Ascending aorta (tissue), 2 donors: ENCODE measurements at regions of chr3 and their contacts with region 1.

Region 1: DNA sequence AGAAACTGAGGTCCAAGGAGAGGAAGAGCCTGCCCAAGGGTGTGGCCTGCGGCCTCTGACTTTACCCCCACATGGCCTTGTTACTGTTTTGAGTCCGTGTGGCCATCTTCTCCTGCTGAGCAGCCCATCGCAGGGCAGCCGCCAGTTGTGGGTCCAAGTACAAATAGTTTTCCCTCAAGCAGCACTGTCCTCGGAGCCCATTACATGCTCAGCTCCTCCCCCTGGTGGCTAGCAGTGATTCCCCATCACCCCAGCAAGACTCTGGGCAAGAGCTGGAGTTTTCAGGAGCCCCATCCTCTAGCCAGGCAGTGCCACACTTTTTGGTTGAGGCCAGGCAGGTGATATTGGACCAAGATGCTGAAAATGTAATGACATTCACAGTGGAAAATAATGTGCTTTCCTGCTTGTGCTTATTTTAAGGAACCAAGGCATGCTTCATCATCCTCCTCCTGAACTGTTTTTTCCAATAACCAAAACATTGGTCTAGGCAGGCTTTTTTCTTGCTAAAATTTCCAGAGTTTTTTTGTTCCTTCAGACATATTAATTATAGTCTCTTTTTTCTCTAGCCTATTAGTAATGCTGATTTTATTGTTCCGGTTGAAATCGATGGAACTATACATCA is 23.2 kb upstream of the VILL start:
- DNase-seq: peak in 1 of 2 donors; percentile 84
- H3K4me3 ChIP-seq: no peak overlapping the region
- H3K27ac ChIP-seq: no peak overlapping the region
- H3K4me1 ChIP-seq: peaks cover 0 to 8% of the 10 kb centered on the region in 2 donors
- H3K27me3 ChIP-seq: no peaks in the 10 kb centered on the region
- CTCF ChIP-seq: peak; percentile 56 to 85 (median 83)

Region 2: GRCh38 chr3:37855363-37855970 is 111.9 kb before region 1 on chr3:
- intact Hi-C with region 1: loop called (anchors 1 kb)
- DNase-seq: peak in 1 of 2 donors; percentile 91
- H3K4me3 ChIP-seq: no peak overlapping the region
- H3K27ac ChIP-seq: no peak overlapping the region
- H3K4me1 ChIP-seq: peaks cover 7 to 13% of the 10 kb centered on the region in 2 donors
- H3K27me3 ChIP-seq: no peaks in the 10 kb centered on the region
- CTCF ChIP-seq: peak; percentile 87 to 97 (median 90)

Region 3: GRCh38 chr3:37922721-37923568 is 44.4 kb before region 1 on chr3:
- intact Hi-C with region 1: loop called (anchors 5 kb)
- DNase-seq: peak; percentile 47 to 86
- H3K4me3 ChIP-seq: peak overlapping the region in 1 of 2 donors; percentile 4
- H3K27ac ChIP-seq: peak overlapping the region; percentile 72 to 74
- H3K4me1 ChIP-seq: peaks cover 8 to 52% of the 10 kb centered on the region in 2 donors
- H3K27me3 ChIP-seq: no peaks in the 10 kb centered on the region
- CTCF ChIP-seq: no peak

Region 4: GRCh38 chr3:37955918-37956707 is 11.3 kb before region 1 on chr3:
- intact Hi-C with region 1: no loop called
- DNase-seq: no peak
- H3K4me3 ChIP-seq: no peak overlapping the region
- H3K27ac ChIP-seq: peak overlapping the region; percentile 62 to 71
- H3K4me1 ChIP-seq: peaks cover 0 to 28% of the 10 kb centered on the region in 2 donors
- H3K27me3 ChIP-seq: no peaks in the 10 kb centered on the region
- CTCF ChIP-seq: no peak